ENCODE measurements at regions of chr2 and their contacts with region 1.

Region 1: GRCh38 chr2:203858176-203858575 is 9.4 kb upstream of the CTLA4 start:
- DNase-seq: no peak
- H3K4me3 Mint-ChIP-seq: no peak overlapping the region
- H3K27ac Mint-ChIP-seq: no peak overlapping the region
- H3K4me1 Mint-ChIP-seq: peaks cover 76% of the 10 kb centered on the region
- H3K27me3 Mint-ChIP-seq: no peaks in the 10 kb centered on the region

Region 2: GRCh38 chr2:203763938-203764664 is 94.1 kb before region 1 on chr2:
- intact Hi-C with region 1: no loop called
- DNase-seq: peak; percentile 20
- H3K4me3 Mint-ChIP-seq: peak overlapping the region; percentile 22
- H3K27ac Mint-ChIP-seq: peak overlapping the region; percentile 95
- H3K4me1 Mint-ChIP-seq: peaks cover 66% of the 10 kb centered on the region
- H3K27me3 Mint-ChIP-seq: no peaks in the 10 kb centered on the region

Region 3: DNA sequence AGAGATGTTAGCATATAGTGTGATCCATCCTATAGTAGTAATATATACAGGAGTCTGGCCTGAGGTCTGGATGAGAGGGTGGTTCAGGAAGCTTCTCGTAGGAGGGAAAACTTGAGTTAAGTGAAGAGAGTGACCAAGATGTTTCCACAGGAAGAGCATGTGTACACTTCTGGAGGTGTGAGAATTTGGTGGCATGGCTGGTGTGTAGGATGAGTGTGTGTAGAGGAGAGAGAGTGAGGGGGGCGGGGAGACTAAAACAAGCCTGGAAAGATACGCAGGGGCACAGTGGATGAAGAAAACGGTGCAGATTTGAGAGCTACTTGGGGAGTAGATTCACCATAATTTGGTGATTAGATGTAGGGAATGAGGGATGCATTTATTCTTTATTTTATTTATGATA is 34.1 kb before region 1 on chr2:
- intact Hi-C with region 1: loop called (anchors 1 kb)
- DNase-seq: no peak
- H3K4me3 Mint-ChIP-seq: no peak overlapping the region
- H3K27ac Mint-ChIP-seq: peak overlapping the region; percentile 79
- H3K4me1 Mint-ChIP-seq: peaks cover 48% of the 10 kb centered on the region
- H3K27me3 Mint-ChIP-seq: no peaks in the 10 kb centered on the region

Region 4: DNA sequence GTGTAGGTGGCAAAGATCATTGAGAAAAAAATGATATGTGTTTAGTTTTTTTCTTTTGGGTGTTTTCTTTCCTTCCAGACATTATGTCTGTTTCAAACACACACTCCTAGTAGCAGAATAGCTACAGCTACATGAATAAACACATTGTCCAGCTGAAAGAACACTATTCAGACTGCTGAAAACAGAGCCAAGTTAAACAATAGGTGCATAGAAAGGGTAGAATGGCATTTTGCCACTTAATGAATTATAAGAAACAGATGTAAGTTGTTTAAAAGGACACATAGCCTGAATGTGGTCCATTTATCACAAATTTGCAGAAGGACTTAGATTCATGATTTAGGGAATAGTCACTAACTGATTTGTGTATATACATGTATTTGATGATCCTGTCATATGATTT is 29.5 kb after region 1 on chr2:
- intact Hi-C with region 1: loop called (anchors 1 kb)
- DNase-seq: no peak
- H3K4me3 Mint-ChIP-seq: no peak overlapping the region
- H3K27ac Mint-ChIP-seq: peak overlapping the region; percentile 27
- H3K4me1 Mint-ChIP-seq: peaks cover 74% of the 10 kb centered on the region
- H3K27me3 Mint-ChIP-seq: no peaks in the 10 kb centered on the region

Region 5: DNA sequence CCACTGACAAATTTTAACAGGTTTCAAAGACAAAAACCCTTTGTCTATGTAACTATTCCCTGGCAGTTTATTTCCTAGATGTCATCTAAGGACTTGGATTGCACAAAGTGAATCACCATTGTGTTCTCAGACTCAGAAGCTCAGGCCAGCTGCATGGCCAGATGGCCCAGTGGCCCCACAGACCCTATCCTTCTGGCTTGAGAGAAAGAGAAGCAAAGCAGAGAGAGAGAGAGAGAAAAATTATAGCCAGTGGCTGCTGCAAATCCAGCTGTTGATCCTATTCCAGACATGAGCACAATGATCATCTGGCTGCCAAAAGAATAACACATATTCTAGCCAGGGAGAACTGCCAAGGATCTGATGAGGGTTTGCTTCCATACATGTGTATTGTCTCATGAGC is 35.2 kb after region 1 on chr2:
- intact Hi-C with region 1: loop called (anchors 1 kb)
- DNase-seq: no peak
- H3K4me3 Mint-ChIP-seq: no peak overlapping the region
- H3K27ac Mint-ChIP-seq: peak overlapping the region; percentile 89
- H3K4me1 Mint-ChIP-seq: peaks cover 73% of the 10 kb centered on the region
- H3K27me3 Mint-ChIP-seq: no peaks in the 10 kb centered on the region